PC-9 (cell line): ENCODE measurements at regions of chr1 and their contacts with region 1.

Region 1: DNA sequence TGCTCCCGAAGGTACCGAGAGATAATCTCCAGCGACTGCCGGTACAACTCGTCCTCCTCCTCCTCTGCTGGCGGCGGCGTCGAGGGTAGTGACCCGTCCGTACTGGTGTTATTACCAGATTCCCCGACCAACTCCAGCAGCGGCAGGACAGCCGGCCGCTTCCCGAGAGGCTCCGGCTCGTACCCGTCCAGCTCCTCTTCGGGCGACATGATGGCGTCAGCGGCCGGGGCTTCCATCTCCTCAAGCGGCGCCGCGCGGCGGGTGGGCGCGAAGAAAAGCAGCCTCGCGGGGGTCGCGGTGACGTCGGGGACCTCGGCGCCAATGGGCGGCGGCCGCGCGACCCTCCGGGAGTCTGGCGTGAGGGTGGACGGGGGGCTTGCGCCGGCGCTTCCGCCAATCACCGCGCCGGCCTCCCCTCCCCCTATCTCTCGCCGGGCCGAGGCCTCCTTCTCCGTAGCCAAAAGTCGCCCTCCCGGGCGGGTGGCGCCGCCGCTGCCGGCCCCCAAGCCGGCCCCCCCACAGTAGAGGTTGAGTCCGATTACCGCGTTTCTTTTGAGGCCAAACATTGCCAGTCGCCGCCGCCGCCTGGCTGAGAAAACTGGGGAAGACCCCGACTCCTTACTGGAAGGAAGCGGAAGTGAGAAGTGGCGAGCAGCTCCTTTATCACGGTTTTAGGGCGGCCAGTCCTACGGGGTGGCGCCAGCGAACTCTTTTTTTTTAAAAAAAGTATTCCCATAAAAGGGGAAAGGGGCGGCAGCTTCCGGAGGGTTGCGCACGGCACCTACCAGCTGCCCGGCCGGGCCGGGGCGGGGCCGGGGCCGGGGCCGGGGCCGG is at the start of gene MCL1:
- DNase-seq: peak; percentile 90
- H3K4me3 ChIP-seq: peak within 1 kb of the TSS; percentile 73
- H3K27ac ChIP-seq: peak within 1 kb of the TSS; percentile 93
- H3K4me1 ChIP-seq: peaks cover 32% of the 10 kb centered on the region
- H3K27me3 ChIP-seq: no peaks in the 10 kb centered on the region
- CTCF ChIP-seq: no peak
- total RNA-seq, gene MCL1: 145 and 178 TPM in 2 replicates

Region 2: GRCh38 chr1:150567717-150568593 is 11.2 kb before region 1 on chr1:
- CTCF ChIA-PET with region 1: interaction called, 3 read pairs
- POLR2A ChIA-PET with region 1: interaction called, 20 read pairs
- intact Hi-C with region 1: no loop called
- DNase-seq: peak; percentile 94 to 98
- H3K4me3 ChIP-seq: peak overlapping the region; percentile 15; the same call in 1 of the 2 replicates
- H3K27ac ChIP-seq: peak overlapping the region; percentile 93
- H3K4me1 ChIP-seq: peaks cover 84% of the 10 kb centered on the region
- H3K27me3 ChIP-seq: no peaks in the 10 kb centered on the region
- CTCF ChIP-seq: no peak

Region 3: GRCh38 chr1:150613061-150613920 is 34.1 kb after region 1 on chr1:
- CTCF ChIA-PET with region 1: no interaction called
- POLR2A ChIA-PET with region 1: interaction called, 5 read pairs
- intact Hi-C with region 1: loop called (anchors 2 kb)
- DNase-seq: peak in 1 of 2 experiments; percentile 86
- H3K4me3 ChIP-seq: no peak overlapping the region
- H3K27ac ChIP-seq: peak overlapping the region; percentile 97
- H3K4me1 ChIP-seq: peaks cover 52% of the 10 kb centered on the region
- H3K27me3 ChIP-seq: no peaks in the 10 kb centered on the region
- CTCF ChIP-seq: no peak

Region 4: DNA sequence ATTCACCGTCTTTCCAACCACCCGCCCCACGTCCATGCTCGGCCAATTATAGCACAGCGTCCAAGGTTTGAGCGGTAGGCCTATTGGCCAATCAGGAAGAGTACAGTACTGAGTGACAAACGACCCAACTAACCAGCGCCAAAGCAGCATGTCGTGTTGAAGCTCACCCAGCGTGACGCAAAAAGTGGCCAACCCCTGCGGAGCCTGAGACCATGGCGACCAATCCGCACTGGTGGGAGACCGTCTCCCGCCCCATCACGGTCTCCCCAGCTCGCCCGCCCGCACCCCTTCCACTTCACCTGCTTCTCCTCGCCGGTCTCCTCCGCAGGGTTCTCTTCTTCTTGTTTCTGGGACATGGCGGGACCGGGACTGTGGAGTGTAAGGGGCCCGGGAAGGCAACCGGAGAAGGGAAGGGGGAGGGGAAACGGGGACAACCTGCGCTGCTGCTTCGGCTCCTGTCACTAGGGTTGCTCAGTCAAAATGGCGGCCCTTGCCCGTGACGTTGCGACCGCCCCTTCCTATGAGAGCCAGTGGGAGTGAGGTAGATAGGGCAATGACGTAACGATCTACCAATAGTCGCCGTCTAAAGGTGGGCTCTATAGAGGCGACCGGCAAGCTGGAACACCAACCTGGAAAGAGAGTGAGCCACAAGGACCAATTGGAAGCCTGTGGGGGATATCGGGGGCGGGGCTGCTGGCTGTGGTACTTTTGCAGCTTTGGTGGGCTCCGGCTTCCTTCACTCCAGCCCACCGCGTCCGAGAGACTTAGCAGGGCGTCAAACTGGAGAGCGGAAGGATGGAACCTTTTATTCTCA is 50.1 kb after region 1 on chr1 and contains the start of gene ENSA:
- CTCF ChIA-PET with region 1: no interaction called
- POLR2A ChIA-PET with region 1: interaction called, 34 read pairs
- intact Hi-C with region 1: loop called (anchors 1 kb)
- DNase-seq: peak; percentile 95 to 97
- H3K4me3 ChIP-seq: peak within 1 kb of the TSS; percentile 96
- H3K27ac ChIP-seq: peak within 1 kb of the TSS; percentile 76
- H3K4me1 ChIP-seq: peaks cover 49% of the 10 kb centered on the region
- H3K27me3 ChIP-seq: no peaks in the 10 kb centered on the region
- CTCF ChIP-seq: no peak
- total RNA-seq, gene ENSA: 229 and 263 TPM in 2 replicates

Region 5: GRCh38 chr1:150778409-150778808 is 199.2 kb after region 1 on chr1:
- CTCF ChIA-PET with region 1: no interaction called
- POLR2A ChIA-PET with region 1: no interaction called
- intact Hi-C with region 1: no loop called
- DNase-seq: no peak
- H3K4me3 ChIP-seq: no peak overlapping the region
- H3K27ac ChIP-seq: no peak overlapping the region
- H3K4me1 ChIP-seq: no peaks in the 10 kb centered on the region
- H3K27me3 ChIP-seq: no peaks in the 10 kb centered on the region
- CTCF ChIP-seq: no peak

Region 6: GRCh38 chr1:150813058-150813707 is 234.0 kb after region 1 on chr1:
- CTCF ChIA-PET with region 1: interaction called, 3 read pairs
- POLR2A ChIA-PET with region 1: interaction called, 3 read pairs
- intact Hi-C with region 1: loop called (anchors 5 kb)
- DNase-seq: peak; percentile 38 to 75
- H3K4me3 ChIP-seq: no peak overlapping the region
- H3K27ac ChIP-seq: no peak overlapping the region
- H3K4me1 ChIP-seq: no peaks in the 10 kb centered on the region
- H3K27me3 ChIP-seq: no peaks in the 10 kb centered on the region
- CTCF ChIP-seq: peak; percentile 85

Region 7: DNA sequence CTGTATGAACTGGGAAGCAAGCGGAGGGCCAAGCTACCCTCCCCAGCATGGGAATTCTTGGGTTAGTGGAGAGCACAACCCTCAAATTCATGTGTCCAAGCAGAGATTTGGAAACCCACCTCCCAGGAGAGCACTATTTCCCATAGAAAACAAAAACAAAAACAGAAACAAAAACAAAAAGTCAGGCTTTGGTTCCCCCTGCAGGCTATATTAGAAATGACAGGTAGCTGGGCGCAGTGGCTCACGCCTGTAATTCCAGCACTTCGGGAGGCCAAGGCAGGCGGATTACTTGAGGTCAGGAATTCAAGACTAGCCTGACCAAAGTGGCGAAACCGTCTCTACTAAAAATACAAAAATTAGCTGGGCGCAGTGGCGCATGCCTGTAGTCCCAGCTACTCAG is 416.7 kb after region 1 on chr1:
- CTCF ChIA-PET with region 1: no interaction called
- POLR2A ChIA-PET with region 1: interaction called, 10 read pairs
- intact Hi-C with region 1: no loop called
- DNase-seq: peak in 1 of 2 experiments; percentile 43
- H3K4me3 ChIP-seq: no peak overlapping the region
- H3K27ac ChIP-seq: no peak overlapping the region
- H3K4me1 ChIP-seq: 0 out of 2 replicates have a peak, but pooled peaks cover 5% of the 10 kb centered on the region
- H3K27me3 ChIP-seq: no peaks in the 10 kb centered on the region
- CTCF ChIP-seq: peak; percentile 97